Activated naive CD4-positive, alpha-beta T cell treated with anti-CD3 and anti-CD28 coated beads for 36 hours (primary cell): ENCODE measurements at regions of chr2 and their contacts with region 1.

Region 1: GRCh38 chr2:128090945-128091725 is at the start of gene UGGT1:
- DNase-seq: peak; percentile 96
- H3K4me3 Mint-ChIP-seq: peak within 1 kb of the TSS; percentile 90
- H3K27ac Mint-ChIP-seq: peak within 1 kb of the TSS; percentile 86
- H3K4me1 Mint-ChIP-seq: peaks cover 42% of the 10 kb centered on the region
- H3K27me3 Mint-ChIP-seq: no peaks in the 10 kb centered on the region
- total RNA-seq, gene UGGT1: 37.3 to 40.1 TPM

Region 2: DNA sequence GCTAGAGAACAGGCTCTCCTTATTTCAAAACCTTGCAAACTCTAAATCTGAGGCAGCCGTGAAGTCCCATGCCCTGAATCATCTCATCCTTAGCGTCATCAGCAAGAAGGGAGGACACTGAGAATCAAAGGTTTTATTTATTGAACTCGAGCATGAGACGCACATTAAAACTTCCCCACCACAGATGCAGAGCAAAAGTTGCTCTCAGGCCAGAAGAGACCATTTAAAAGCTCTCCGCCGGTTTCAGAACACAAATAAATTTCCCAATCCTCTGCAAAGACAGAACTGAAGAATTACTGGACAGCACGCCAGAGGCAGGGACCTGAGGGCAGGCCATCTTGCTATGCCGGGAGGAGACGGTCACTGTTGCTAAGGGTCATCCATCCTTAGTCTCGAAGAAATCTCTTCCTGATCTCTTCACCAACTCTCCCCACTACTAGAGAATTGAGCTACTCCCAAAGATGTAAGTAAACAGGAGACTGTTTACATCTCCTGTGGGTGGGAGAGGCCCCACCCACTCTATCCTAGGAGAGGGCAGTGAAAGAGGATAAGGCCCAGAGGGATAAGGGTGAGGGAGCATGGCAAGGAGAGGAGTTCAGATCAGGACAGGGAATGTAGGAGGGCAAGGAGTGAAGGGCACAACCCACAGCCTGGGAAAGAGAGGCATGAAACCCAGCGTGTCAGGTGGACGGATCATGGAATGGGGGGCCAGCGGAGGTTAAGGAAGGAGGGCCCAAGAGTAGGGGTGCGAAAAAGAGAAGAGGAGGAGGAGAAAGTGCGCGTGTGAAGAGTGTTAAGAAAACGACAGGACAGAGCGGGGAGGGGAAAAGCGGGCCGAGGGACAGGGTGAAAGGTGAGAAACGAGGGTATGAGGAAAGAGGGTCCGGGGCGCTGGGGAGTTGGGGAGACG is 206.4 kb before region 1 on chr2:
- CTCF ChIA-PET with region 1: no interaction called
- intact Hi-C with region 1: loop called (anchors 2 kb)
- DNase-seq: no peak
- H3K4me3 Mint-ChIP-seq: peak overlapping the region; percentile 86
- H3K27ac Mint-ChIP-seq: peak overlapping the region; percentile 71
- H3K4me1 Mint-ChIP-seq: peaks cover 60% of the 10 kb centered on the region
- H3K27me3 Mint-ChIP-seq: no peaks in the 10 kb centered on the region